ENCODE measurements at regions of chr2 and their contacts with region 1.

Region 1: GRCh38 chr2:46002507-46002883 is 294.7 kb upstream of the EPAS1 start:
- DNase-seq: no peak
- ATAC-seq: peak in 3 of 4 donors; percentile 44 to 66 (median 66)
- H3K4me3 ChIP-seq: no peak overlapping the region
- H3K27ac ChIP-seq: no peak overlapping the region
- H3K4me1 ChIP-seq: peaks cover 0 to 2% (median 0%) of the 10 kb centered on the region in 3 donors
- H3K27me3 ChIP-seq: no peaks in the 10 kb centered on the region
- CTCF ChIP-seq: no peak

Region 2: GRCh38 chr2:45821564-45822271 is 180.8 kb before region 1 on chr2:
- intact Hi-C with region 1: no loop called
- DNase-seq: peak; percentile 71 to 90 (median 86)
- ATAC-seq: peak; percentile 78 to 88 (median 80)
- H3K4me3 ChIP-seq: no peak overlapping the region
- H3K27ac ChIP-seq: peak overlapping the region; percentile 60 to 81 (median 68)
- H3K4me1 ChIP-seq: peaks cover 23 to 38% (median 35%) of the 10 kb centered on the region in 3 donors
- H3K27me3 ChIP-seq: no peaks in the 10 kb centered on the region
- CTCF ChIP-seq: no peak

Region 3: DNA sequence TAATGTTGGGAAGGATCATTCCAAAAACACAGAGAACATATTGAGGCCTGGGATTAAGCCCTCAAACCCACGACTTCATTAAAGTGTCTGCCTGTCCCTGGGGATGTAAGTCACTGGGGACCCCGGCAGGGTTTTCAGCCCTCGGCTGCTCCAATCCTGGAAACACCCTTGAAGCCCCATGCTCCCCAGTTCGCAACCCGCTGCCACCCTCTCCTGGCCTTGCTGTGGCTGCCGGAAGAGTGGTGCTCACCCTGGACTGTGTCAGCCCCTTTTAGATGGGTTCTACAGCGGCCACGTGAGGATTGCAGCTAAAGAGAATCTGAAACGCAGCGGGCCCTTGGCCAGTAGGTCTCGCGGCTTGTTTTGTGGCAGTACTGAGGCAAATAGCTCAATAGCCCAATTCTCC is 374.7 kb after region 1 on chr2:
- intact Hi-C with region 1: loop called in 1 of 3 experiments (anchors 10 kb)
- DNase-seq: no peak
- ATAC-seq: peak in 1 of 4 donors; percentile 38
- H3K4me3 ChIP-seq: no peak overlapping the region
- H3K27ac ChIP-seq: no peak overlapping the region
- H3K4me1 ChIP-seq: no peaks in the 10 kb centered on the region
- H3K27me3 ChIP-seq: no peaks in the 10 kb centered on the region
- CTCF ChIP-seq: no peak

Region 4: DNA sequence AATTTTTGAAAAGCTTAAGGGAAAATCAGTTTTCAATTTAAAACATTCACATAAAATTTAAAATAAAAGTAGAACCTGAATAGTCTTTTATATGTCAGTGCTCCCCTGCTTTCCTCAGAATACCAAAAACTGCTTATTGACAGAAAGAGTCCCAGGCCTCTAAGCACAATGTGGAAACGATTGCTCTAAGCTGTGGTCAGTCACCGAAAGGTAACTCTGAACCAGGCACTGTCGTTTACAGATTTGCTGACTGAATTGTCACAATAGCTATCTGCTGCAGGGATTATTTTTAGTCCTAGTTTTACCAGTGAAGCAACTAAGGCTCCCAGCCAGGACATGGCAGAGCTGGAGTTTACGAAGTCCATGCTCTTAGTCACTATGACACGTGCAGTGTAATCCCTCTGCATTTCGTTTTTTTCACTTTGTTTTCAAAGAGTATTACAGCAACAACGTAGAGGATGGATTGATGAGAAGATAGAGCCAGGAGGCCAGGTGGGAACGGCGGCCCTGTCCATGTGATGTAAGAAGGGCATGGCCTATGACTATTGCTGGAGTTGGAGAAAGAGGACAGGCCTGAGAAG is 448.7 kb after region 1 on chr2:
- intact Hi-C with region 1: loop called in 1 of 3 experiments (anchors 10 kb)
- DNase-seq: no peak
- ATAC-seq: no peak
- H3K4me3 ChIP-seq: no peak overlapping the region
- H3K27ac ChIP-seq: no peak overlapping the region
- H3K4me1 ChIP-seq: no peaks in the 10 kb centered on the region
- H3K27me3 ChIP-seq: no peaks in the 10 kb centered on the region
- CTCF ChIP-seq: no peak